Activated naive CD4-positive, alpha-beta T cell treated with anti-CD3 and anti-CD28 coated beads, Interleukin-2, amount 10 ng/mL, durations not matched to agents 7 days and 5 days (primary cell): ENCODE measurements at regions of chr5 and their contacts with region 1.

Region 1: DNA sequence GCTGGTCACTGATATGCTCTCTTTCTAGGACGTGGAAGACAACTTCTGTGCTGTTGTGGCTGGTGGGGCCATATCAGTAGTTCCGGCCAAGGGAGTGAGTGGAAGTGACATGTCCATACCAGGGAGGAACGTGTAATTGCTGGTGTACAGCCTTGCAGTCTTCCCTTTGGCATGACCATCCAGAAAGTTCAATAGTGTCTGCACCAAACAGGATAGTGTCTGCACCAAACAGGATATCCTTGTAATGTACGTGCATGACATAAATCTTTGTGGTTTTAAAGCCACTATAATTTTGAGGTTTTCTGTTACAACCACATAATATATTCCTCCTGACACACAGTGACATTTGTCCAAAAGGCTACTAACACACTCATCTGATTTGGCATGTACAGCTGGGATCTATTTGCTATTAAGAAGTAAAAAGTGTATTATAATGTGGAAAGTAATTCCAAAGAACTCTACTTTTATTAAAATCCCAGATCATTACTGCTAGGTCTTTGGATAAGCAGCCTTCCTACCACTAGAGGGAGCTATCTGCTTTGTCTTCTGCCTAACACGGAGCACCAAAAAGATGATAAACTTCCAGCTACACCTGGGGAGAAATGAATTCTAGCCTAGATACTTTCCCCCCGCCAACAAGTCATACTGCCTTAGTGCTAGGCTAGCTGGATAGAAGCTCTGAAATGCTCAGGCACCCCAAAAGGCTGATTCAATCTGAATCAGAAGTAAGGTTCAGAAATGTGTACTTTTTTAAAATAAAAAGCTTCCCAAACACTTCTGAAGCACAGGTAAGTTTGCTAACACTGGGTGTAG is 52.7 kb downstream of the RNF145 start:
- DNase-seq: peak; percentile 39
- H3K4me3 Mint-ChIP-seq: no peak overlapping the region
- H3K27ac Mint-ChIP-seq: peak overlapping the region; percentile 73
- H3K4me1 Mint-ChIP-seq: peaks cover 25% of the 10 kb centered on the region
- H3K27me3 Mint-ChIP-seq: no peaks in the 10 kb centered on the region

Region 2: GRCh38 chr5:158869092-158869491 is 287.5 kb before region 1 on chr5:
- CTCF ChIA-PET with region 1: no interaction called
- DNase-seq: no peak
- H3K4me3 Mint-ChIP-seq: no peak overlapping the region
- H3K27ac Mint-ChIP-seq: no peak overlapping the region
- H3K4me1 Mint-ChIP-seq: peaks cover under 1% of the 10 kb centered on the region
- H3K27me3 Mint-ChIP-seq: peaks cover 8% of the 10 kb centered on the region

Region 3: DNA sequence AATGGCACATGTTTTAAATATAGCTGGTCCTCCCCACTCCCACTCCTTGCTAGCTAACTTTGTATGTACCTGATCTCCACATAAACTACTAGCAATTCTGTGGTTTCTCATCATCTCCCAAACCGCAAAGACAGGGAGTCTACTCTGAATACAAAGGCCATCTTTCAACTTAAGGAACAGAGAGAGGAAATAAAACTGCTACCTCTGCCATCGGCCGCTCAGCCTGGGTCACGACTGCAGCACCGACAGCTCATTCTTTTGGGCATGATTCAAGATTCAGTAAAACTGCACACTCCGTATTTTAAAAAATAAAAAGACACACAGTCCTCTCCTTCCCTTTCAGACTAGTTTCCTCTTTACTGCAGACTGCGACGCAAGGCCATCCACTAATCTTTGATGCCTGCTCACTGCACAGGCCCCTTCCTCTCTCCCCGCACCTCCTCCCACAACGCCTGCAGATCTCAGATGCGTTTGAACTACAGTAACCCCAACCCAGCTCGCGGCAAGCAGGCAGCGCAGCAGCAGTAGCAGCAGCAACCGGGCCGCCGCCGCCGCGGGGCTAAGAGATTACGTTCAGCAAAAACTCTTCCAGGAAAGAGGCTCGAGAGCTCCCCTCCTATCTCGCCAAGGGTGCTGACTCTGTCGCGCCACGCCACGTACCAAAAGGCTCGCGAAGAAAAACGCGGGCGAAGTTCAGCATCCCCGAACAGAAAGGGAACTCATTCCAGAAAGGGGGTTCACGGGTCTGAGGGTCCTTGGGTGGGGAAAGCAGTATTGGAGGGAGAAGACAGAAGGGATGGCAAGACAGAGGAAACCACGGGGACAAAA is 51.3 kb after region 1 on chr5:
- CTCF ChIA-PET with region 1: interaction called, 14 read pairs
- DNase-seq: peak; percentile 87
- H3K4me3 Mint-ChIP-seq: peak overlapping the region; percentile 96
- H3K27ac Mint-ChIP-seq: peak overlapping the region; percentile 99
- H3K4me1 Mint-ChIP-seq: peaks cover 70% of the 10 kb centered on the region
- H3K27me3 Mint-ChIP-seq: no peaks in the 10 kb centered on the region

Region 4: GRCh38 chr5:159316519-159317383 is 160.1 kb after region 1 on chr5:
- CTCF ChIA-PET with region 1: interaction called, 79 read pairs
- DNase-seq: peak; percentile 69
- H3K4me3 Mint-ChIP-seq: no peak overlapping the region
- H3K27ac Mint-ChIP-seq: no peak overlapping the region
- H3K4me1 Mint-ChIP-seq: no peaks in the 10 kb centered on the region
- H3K27me3 Mint-ChIP-seq: peaks cover 37% of the 10 kb centered on the region